Dendritic cell treated with granulocyte-macrophage colony-stimulating factor and Interleukin-4, amounts not matched to agents 40 ng/mL and 50 ng/mL, for 4 days (primary cell): ENCODE measurements at regions of chr14 and their contacts with region 1.

Region 1: GRCh38 chr14:20697273-20698017 is 8.9 kb downstream of the ANG start:
- H3K4me3 Mint-ChIP-seq: no peak overlapping the region
- H3K27ac Mint-ChIP-seq: no peak overlapping the region
- H3K4me1 Mint-ChIP-seq: peaks cover 23% of the 10 kb centered on the region
- H3K27me3 Mint-ChIP-seq: no peaks in the 10 kb centered on the region

Region 2: DNA sequence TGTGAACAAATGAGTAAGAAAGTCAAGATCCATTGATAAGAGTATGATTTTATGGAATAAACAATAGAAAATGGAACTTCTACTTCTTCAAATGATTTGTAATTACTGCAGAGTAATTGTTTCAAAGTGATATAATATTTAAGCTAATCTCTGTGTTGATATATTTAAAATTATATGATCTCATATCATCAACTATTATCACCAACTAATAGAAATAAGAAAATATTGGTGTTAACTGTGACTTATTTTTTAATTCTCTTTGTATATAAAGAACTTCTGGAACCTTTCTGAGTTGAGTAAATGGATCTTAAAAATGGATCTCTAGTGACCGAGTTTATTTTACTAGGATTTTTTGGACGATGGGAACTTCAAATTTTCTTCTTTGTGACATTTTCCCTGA is 637.7 kb before region 1 on chr14 and contains the start of gene OR4L1:
- intact Hi-C with region 1: no loop called
- H3K4me3 Mint-ChIP-seq: no peak within 1 kb of the TSS
- H3K27ac Mint-ChIP-seq: no peak within 1 kb of the TSS
- H3K4me1 Mint-ChIP-seq: no peaks in the 10 kb centered on the region
- H3K27me3 Mint-ChIP-seq: no peaks in the 10 kb centered on the region

Region 3: GRCh38 chr14:20732979-20733635 is 35.7 kb after region 1 on chr14:
- intact Hi-C with region 1: loop called (anchors 5 kb)
- H3K4me3 Mint-ChIP-seq: peak overlapping the region; percentile 24
- H3K27ac Mint-ChIP-seq: peak overlapping the region; percentile 89
- H3K4me1 Mint-ChIP-seq: peaks cover 41% of the 10 kb centered on the region
- H3K27me3 Mint-ChIP-seq: no peaks in the 10 kb centered on the region

Region 4: DNA sequence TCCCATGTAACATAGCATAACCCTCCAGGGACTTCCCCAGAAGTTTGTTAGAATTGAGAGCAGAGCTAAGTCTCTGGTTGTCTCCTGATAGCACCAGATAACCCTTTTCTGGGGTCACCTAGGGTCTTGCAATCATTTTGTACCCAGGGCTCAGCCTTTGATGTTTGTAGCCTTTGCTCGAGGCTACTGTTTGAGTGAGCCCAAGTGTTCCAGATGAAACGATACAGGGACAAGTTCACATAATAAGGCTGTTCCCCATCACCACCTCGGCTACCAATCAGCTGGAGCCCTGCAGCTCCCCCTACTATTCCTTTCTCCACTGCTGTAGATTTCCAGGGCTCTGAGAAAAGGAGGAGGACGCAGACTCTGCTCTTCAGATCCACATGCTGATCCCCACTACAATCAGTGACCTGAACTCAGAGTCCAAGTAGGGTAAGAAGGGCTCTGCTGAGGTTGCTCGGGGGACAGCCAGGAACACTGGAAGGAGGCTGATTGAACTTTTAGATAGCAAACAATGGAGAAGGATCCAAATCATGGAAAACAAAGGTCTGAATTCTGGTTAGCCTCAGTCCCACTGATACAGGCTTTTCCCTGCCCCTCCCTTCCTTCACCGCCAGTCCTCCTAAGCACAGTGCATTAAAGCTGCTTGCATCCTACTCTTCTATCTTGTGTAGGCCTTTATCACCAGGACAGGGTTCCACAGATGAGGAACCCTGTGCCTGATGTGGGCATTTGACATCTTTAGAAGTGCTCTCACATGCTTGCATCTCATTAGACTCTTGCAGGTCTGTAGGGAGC is 48.3 kb after region 1 on chr14 and contains the start of gene EDDM3A:
- intact Hi-C with region 1: loop called (anchors 5 kb)
- H3K4me3 Mint-ChIP-seq: no peak within 1 kb of the TSS
- H3K27ac Mint-ChIP-seq: peak within 1 kb of the TSS; percentile 82
- H3K4me1 Mint-ChIP-seq: peaks cover 35% of the 10 kb centered on the region
- H3K27me3 Mint-ChIP-seq: no peaks in the 10 kb centered on the region

Region 5: GRCh38 chr14:20782280-20782890 is 84.9 kb after region 1 on chr14:
- intact Hi-C with region 1: loop called (anchors 5 kb)
- H3K4me3 Mint-ChIP-seq: peak overlapping the region; percentile 100
- H3K27ac Mint-ChIP-seq: peak overlapping the region; percentile 99
- H3K4me1 Mint-ChIP-seq: peaks cover 58% of the 10 kb centered on the region
- H3K27me3 Mint-ChIP-seq: no peaks in the 10 kb centered on the region

Region 6: GRCh38 chr14:20836668-20837338 is 139.4 kb after region 1 on chr14:
- intact Hi-C with region 1: no loop called
- H3K4me3 Mint-ChIP-seq: no peak overlapping the region
- H3K27ac Mint-ChIP-seq: peak overlapping the region; percentile 74
- H3K4me1 Mint-ChIP-seq: peaks cover 35% of the 10 kb centered on the region
- H3K27me3 Mint-ChIP-seq: no peaks in the 10 kb centered on the region

Region 7: DNA sequence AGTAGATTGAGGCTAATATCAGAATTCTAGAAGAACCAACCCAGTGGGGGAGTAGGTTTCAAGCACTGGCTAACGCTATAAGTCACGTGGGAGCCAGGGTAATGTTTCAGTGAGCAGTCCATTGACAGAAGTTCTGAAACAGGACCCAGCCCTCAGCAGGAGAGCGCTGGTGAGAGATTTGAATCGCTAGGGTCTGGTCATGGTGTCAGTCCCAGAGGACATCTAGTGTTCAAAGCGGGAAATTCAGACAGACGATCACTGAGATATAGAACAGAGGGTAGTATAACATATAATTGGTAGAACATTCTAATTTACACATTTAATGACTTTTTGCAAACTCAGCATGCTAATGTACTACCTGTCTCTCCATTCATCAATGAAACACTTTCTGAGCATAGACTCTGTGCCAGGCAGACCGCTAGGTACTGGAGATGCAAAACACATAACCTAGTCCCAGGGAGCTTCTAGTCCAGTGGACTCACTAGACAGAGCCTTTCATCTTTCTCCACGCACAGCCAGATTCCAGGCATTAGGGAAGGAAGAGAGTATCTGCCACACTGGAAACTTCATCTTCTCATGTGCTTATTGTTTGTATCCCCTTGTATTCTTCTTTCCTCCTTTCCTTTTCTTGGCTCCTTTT is 158.3 kb after region 1 on chr14:
- intact Hi-C with region 1: loop called (anchors 1 kb)
- H3K4me3 Mint-ChIP-seq: no peak overlapping the region
- H3K27ac Mint-ChIP-seq: no peak overlapping the region
- H3K4me1 Mint-ChIP-seq: peaks cover 31% of the 10 kb centered on the region
- H3K27me3 Mint-ChIP-seq: no peaks in the 10 kb centered on the region

Region 8: DNA sequence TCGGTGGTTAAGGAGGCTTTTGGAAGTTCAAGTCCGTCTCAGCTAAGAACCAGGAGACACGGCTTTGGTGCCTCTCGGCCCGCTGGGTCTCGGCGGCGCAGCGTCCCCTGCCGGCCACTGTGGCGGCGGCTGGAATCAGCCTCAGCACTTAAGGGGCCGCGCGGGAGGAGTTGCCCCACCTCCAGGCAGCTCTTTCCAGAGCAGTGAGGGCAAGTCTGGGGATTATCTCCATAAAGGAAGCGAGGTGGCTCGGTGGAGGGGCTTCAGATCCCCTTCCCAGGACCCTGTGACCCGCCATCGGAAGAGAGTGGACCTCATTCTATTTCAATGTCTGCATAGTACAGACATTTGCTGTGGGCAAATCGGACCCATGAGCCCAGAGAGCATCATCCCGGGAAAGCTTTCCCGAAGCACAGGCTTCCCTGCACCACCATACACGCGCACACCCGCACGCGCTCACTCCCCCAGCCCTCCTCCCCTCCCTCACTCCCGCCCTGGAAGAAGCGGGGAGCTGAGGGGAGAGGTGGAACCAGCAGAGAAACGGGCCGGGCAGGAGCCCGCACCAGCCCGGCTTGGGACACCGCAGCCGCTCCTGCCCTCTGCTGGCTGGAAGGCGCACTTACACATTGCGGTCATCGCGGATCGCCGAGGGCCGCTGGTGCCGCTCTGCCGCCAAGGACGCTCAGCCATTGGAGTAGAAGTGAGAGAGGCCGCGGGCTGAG is 273.7 kb after region 1 on chr14:
- intact Hi-C with region 1: loop called (anchors 5 kb)
- H3K4me3 Mint-ChIP-seq: peak overlapping the region; percentile 84
- H3K27ac Mint-ChIP-seq: peak overlapping the region; percentile 68
- H3K4me1 Mint-ChIP-seq: peaks cover 25% of the 10 kb centered on the region
- H3K27me3 Mint-ChIP-seq: no peaks in the 10 kb centered on the region